Aorta (tissue), 5 donors: ENCODE measurements at regions of chr2 and their contacts with region 1.

Region 1: DNA sequence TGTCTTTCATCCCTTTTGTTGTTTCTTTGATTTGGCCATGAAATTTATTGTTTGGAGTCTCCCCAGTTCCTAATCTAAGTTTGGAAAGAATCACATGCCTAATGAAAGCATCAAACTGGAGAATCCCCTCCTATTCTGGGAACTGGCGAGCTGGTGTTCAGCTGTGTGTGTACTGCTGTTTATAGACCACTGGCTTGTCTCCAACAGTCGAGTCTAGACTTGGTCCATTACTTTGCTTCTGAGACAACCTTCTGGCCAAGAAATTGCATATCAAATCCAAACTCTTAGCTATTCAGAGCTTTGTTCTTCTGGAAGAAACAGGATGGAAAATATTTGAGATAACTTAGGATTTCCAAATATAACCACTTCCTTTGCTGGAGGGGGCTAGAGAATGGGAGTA is 111.5 kb upstream of the THSD7B start:
- DNase-seq: peak in 1 of 2 donors; percentile 69
- ATAC-seq: peak; percentile 89
- H3K4me3 ChIP-seq: no peak overlapping the region
- H3K27ac ChIP-seq: no peak overlapping the region
- H3K4me1 ChIP-seq: peaks cover 3 to 7% of the 10 kb centered on the region in 2 donors
- H3K27me3 ChIP-seq: no peaks in the 10 kb centered on the region

Region 2: GRCh38 chr2:136638193-136638592 is 15.7 kb before region 1 on chr2:
- intact Hi-C with region 1: no loop called
- DNase-seq: no peak
- ATAC-seq: no peak
- H3K4me3 ChIP-seq: no peak overlapping the region
- H3K27ac ChIP-seq: no peak overlapping the region
- H3K4me1 ChIP-seq: peaks cover 0 to 11% of the 10 kb centered on the region in 2 donors
- H3K27me3 ChIP-seq: no peaks in the 10 kb centered on the region

Region 3: GRCh38 chr2:136765736-136766323 is 112.0 kb after region 1 on chr2:
- intact Hi-C with region 1: loop called in 1 of 2 experiments (anchors 10 kb)
- DNase-seq: peak; percentile 38 to 72
- ATAC-seq: peak; percentile 43
- H3K4me3 ChIP-seq: peak overlapping the region; percentile 57 to 81
- H3K27ac ChIP-seq: no peak overlapping the region
- H3K4me1 ChIP-seq: no peaks in the 10 kb centered on the region
- H3K27me3 ChIP-seq: no peaks in the 10 kb centered on the region